B cell (primary cell): ENCODE measurements at regions of chr3 and their contacts with region 1.

Region 1: DNA sequence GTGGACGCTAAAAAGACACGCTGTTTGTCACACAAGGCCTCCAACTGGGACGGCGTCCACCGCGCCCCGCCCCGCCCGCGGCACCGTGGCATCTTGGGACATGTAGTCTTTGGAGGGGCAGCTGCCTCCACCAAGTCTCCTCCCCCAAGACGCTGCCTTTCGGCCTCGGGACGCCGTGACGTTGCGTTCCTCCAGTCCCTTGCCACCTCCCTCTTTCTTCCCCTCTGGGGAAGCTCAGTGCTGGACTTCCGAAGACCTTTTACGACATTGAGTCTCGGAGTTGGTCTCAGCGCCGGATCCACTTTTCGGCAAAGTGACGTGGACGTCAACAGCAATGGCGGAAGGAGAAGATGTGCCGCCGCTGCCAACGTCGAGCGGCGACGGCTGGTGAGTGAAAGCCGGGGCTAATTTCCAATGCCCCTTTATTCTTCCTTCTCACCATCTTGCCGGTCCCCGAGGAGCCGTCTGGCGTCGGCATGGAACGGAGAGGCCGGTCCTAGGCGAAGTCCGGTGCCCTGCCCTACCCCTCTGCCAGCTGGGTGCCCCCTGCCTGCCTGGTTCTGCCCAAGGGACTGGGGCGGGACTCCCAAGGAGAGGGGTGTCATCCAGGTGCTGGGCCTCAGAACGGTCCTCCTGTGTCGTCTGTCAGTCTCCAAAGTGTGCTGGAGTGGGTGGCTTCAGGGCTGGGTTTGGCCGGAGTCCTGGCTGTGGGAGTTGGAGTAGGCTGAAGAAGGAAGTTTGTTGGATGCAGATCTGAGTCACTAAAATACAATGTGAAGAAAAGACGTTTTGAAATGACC is at the start of gene TBC1D23:
- DNase-seq: peak; percentile 98
- ATAC-seq: peak; percentile 99
- H3K4me3 ChIP-seq: peak within 1 kb of the TSS; percentile 85 to 99 (median 93)
- H3K4me3 Mint-ChIP-seq: peak within 1 kb of the TSS; percentile 91
- H3K27ac ChIP-seq: peak within 1 kb of the TSS; percentile 93 to 95
- H3K27ac Mint-ChIP-seq: peak within 1 kb of the TSS; percentile 98
- H3K4me1 ChIP-seq: peaks cover 9 to 17% of the 10 kb centered on the region in 2 donors
- H3K4me1 Mint-ChIP-seq: peaks cover 45% of the 10 kb centered on the region
- H3K27me3 ChIP-seq: no peaks in the 10 kb centered on the region
- H3K27me3 Mint-ChIP-seq: no peaks in the 10 kb centered on the region
- CTCF ChIP-seq: no peak
- total RNA-seq, gene TBC1D23: 36.5 and 48.5 TPM in 2 replicates

Region 2: DNA sequence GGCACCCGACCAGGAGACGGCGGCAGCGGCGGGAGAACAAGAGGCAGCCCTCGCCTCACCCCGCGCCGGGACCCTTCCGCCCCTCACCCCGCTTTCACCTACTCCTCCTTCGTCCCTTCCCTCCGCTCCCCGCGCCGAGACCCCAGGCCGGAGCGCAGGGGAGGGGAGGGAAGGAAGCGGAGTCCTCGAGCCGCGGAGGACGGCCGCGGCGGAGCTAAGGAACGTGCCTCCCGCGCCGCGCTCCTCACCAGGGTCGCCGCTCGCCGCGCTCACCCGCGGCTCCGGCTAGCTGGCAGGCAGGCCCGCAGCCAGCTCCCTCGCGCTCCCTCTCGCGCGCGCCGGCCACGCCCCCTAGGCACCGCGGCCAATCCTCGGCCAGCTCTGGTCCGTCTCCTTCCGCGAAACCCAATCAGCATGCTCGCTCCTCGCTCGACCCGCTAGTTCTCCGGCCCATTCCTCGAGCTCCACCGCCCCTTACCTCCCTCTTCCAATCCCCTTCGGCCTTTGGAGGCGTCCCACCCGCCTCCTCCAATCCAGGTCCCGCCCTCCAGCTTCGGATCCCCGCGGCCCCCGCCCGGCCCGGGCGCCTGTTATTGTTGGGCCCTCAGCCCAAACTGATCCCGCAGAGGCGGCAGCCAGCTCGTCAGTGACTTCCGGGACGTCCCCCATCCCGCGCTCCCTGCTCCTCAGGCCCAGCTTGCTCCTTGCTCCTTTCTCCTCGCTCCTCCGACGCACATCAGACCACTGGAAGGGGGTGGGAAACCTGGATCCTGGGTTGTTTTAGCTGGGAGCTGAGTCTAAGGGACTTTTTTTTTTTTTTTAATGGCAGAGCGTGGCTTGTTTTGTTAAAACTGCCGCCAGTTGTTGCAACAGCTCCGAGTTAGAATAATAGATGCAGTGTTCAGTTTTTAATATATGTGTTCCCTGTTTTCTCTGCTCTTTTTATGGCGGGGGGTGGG is 1359.2 kb before region 1 on chr3 and contains the start of gene DCBLD2:
- CTCF ChIA-PET with region 1: no interaction called
- POLR2A ChIA-PET with region 1: no interaction called
- intact Hi-C with region 1: loop called (anchors 10 kb)
- DNase-seq: peak; percentile 95
- ATAC-seq: peak; percentile 98
- H3K4me3 ChIP-seq: peak within 1 kb of the TSS; percentile 60 to 93 (median 68)
- H3K4me3 Mint-ChIP-seq: peak within 1 kb of the TSS; percentile 97
- H3K27ac ChIP-seq: peak within 1 kb of the TSS in 1 of 2 donors; percentile 64
- H3K27ac Mint-ChIP-seq: peak within 1 kb of the TSS; percentile 84
- H3K4me1 ChIP-seq: peaks cover 10 to 12% of the 10 kb centered on the region in 2 donors
- H3K4me1 Mint-ChIP-seq: peaks cover 17% of the 10 kb centered on the region
- H3K27me3 ChIP-seq: peaks cover 0 to 7% (median 2%) of the 10 kb centered on the region in 4 experiments
- H3K27me3 Mint-ChIP-seq: peaks cover 12% of the 10 kb centered on the region
- CTCF ChIP-seq: no peak
- total RNA-seq, gene DCBLD2: 2.1 and 3.5 TPM in 2 replicates

Region 3: DNA sequence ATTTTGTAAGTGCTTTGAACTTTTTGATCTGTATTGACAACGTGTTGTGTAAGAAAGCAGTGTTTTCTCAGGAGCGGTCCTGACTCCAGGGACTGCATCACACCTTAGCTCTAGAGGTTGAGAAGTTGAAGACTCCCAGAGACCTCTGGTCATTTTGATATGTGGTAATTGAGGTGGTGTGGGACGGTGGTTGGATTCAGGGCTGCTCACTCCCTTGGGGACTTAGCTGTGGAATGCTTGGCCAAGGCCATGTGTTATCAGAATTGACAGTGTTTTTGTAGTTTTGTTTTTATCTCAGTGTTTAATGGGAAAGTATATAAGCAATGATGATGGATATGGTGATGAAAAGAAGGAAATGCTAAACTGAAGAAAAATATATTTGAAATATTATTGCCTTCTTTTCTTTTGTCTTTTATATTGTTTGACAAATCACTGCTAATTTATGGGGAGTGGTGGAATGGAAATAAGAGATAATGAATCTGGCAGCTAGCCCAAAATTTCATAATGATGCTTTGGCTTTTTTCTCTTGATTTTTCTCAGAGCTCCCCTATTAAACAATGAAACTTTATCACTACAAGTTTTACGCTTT is 427.2 kb before region 1 on chr3:
- CTCF ChIA-PET with region 1: interaction called, 158 read pairs
- POLR2A ChIA-PET with region 1: no interaction called
- intact Hi-C with region 1: no loop called
- DNase-seq: no peak
- ATAC-seq: no peak
- H3K4me3 ChIP-seq: no peak overlapping the region
- H3K4me3 Mint-ChIP-seq: no peak overlapping the region
- H3K27ac ChIP-seq: no peak overlapping the region
- H3K27ac Mint-ChIP-seq: no peak overlapping the region
- H3K4me1 ChIP-seq: no peaks in the 10 kb centered on the region
- H3K4me1 Mint-ChIP-seq: no peaks in the 10 kb centered on the region
- H3K27me3 ChIP-seq: no peaks in the 10 kb centered on the region
- H3K27me3 Mint-ChIP-seq: no peaks in the 10 kb centered on the region
- CTCF ChIP-seq: no peak

Region 4: GRCh38 chr3:99875929-99876841 is 384.7 kb before region 1 on chr3:
- CTCF ChIA-PET with region 1: interaction called, 4 read pairs
- POLR2A ChIA-PET with region 1: no interaction called
- intact Hi-C with region 1: loop called (anchors 1 kb)
- DNase-seq: peak; percentile 86
- ATAC-seq: peak; percentile 97
- H3K4me3 ChIP-seq: peak overlapping the region; percentile 52 to 74 (median 64)
- H3K4me3 Mint-ChIP-seq: peak overlapping the region; percentile 89
- H3K27ac ChIP-seq: peak overlapping the region; percentile 24 to 71
- H3K27ac Mint-ChIP-seq: peak overlapping the region; percentile 5
- H3K4me1 ChIP-seq: peaks cover 6 to 8% of the 10 kb centered on the region in 2 donors
- H3K4me1 Mint-ChIP-seq: peaks cover 18% of the 10 kb centered on the region
- H3K27me3 ChIP-seq: no peaks in the 10 kb centered on the region
- H3K27me3 Mint-ChIP-seq: no peaks in the 10 kb centered on the region
- CTCF ChIP-seq: no peak

Region 5: GRCh38 chr3:100334488-100335351 is 73.8 kb after region 1 on chr3 and contains the start of gene NIT2:
- CTCF ChIA-PET with region 1: no interaction called
- POLR2A ChIA-PET with region 1: interaction called, 3 read pairs
- intact Hi-C with region 1: loop called (anchors 1 kb)
- DNase-seq: peak; percentile 88
- ATAC-seq: peak; percentile 98
- H3K4me3 ChIP-seq: peak within 1 kb of the TSS; percentile 54 to 82 (median 72)
- H3K4me3 Mint-ChIP-seq: peak within 1 kb of the TSS; percentile 96
- H3K27ac ChIP-seq: peak within 1 kb of the TSS; percentile 54 to 79
- H3K27ac Mint-ChIP-seq: peak within 1 kb of the TSS; percentile 91
- H3K4me1 ChIP-seq: peaks cover 5 to 16% of the 10 kb centered on the region in 2 donors
- H3K4me1 Mint-ChIP-seq: peaks cover 23% of the 10 kb centered on the region
- H3K27me3 ChIP-seq: no peaks in the 10 kb centered on the region
- H3K27me3 Mint-ChIP-seq: no peaks in the 10 kb centered on the region
- CTCF ChIP-seq: no peak
- total RNA-seq, gene NIT2: 34.4 and 36.5 TPM in 2 replicates

Region 6: DNA sequence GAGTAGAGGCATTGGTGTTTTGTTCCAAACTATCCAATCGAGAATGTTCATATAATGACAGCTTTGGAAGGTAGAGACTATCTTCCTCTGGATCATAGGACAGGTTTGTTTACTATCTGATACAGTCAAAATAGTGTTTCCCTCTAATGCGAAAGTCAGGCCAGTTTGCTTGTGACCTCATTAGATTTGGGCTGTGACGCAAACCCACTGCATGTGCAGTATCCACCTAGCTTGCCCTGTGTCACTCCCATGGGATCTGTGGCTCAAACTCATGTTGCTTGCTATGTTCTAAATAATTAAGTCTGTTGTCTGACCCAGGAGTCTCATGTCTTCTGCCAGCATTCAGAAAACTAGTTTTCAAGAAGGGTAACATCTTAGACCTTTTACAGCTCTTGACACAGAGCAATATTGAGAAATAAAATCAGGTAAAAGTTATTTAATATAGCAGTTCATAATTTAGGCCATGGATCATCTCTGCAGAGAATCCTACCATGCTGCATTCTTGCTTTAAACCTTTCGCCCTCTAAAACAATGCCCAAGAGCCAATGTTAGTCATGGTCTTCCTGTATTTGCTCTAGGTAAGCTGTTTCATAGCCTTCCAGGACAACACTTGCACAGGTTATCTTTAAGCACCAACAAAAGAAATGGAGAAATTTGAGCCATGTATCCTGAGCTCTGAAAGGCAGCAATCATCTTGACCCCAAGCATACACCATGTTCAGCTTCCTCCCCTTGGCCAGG is 100.0 kb after region 1 on chr3:
- CTCF ChIA-PET with region 1: no interaction called
- POLR2A ChIA-PET with region 1: no interaction called
- intact Hi-C with region 1: no loop called
- DNase-seq: no peak
- ATAC-seq: no peak
- H3K4me3 ChIP-seq: no peak overlapping the region
- H3K4me3 Mint-ChIP-seq: no peak overlapping the region
- H3K27ac ChIP-seq: no peak overlapping the region
- H3K27ac Mint-ChIP-seq: no peak overlapping the region
- H3K4me1 ChIP-seq: no peaks in the 10 kb centered on the region
- H3K4me1 Mint-ChIP-seq: no peaks in the 10 kb centered on the region
- H3K27me3 ChIP-seq: no peaks in the 10 kb centered on the region
- H3K27me3 Mint-ChIP-seq: no peaks in the 10 kb centered on the region
- CTCF ChIP-seq: no peak

Region 7: DNA sequence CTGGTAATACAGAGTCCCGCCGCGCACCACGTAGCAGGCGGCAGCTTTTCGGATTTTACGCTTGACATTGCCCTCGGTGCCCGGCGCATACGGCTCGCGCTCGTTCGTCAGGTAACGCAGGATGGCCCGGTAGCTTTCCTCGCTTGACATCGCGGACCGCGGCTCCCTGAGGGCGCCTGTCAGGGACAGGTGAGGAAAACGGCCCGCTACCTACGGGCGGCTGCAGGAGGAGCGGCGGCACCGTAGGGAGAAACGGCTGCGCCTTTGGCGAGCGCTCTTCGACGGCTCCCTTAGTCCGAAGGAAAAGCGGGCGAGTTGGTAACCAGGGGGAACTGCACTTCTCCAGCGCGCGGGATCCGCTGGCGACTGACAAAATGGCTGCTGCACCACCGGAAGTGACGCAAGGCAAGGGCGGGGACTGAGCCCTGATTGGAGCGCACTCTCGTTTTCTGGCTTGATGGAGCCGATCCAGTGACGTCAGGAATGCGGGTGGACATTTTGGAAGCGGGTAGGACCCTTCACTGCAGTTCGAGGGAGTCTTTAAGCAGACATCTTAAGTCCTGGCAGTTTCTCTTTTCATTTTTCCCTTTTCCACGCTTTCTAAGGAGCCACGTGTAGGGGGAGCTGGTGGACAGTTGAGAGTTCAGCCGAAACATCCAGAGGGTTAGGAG is 1416.0 kb after region 1 on chr3 and contains the start of gene ZBTB11:
- CTCF ChIA-PET with region 1: no interaction called
- POLR2A ChIA-PET with region 1: no interaction called
- intact Hi-C with region 1: loop called (anchors 2 kb)
- DNase-seq: peak; percentile 99
- ATAC-seq: peak; percentile 65
- H3K4me3 ChIP-seq: peak within 1 kb of the TSS; percentile 73 to 99 (median 94)
- H3K4me3 Mint-ChIP-seq: peak within 1 kb of the TSS; percentile 94
- H3K27ac ChIP-seq: peak within 1 kb of the TSS; percentile 96 to 98
- H3K27ac Mint-ChIP-seq: peak within 1 kb of the TSS; percentile 97
- H3K4me1 ChIP-seq: peaks cover 17 to 21% of the 10 kb centered on the region in 2 donors
- H3K4me1 Mint-ChIP-seq: peaks cover 40% of the 10 kb centered on the region
- H3K27me3 ChIP-seq: no peaks in the 10 kb centered on the region
- H3K27me3 Mint-ChIP-seq: no peaks in the 10 kb centered on the region
- CTCF ChIP-seq: no peak
- total RNA-seq, gene ZBTB11: 40.7 and 42.6 TPM in 2 replicates